ENCODE measurements at regions of chr2 and their contacts with region 1.

Region 1: GRCh38 chr2:101419096-101419663 is 31.9 kb upstream of the CREG2 start:
- DNase-seq: peak; percentile 89
- ATAC-seq: peak; percentile 86
- H3K4me3 ChIP-seq: peak overlapping the region; percentile 48
- H3K27ac ChIP-seq: peak overlapping the region; percentile 85
- H3K4me1 ChIP-seq: peaks cover 14% of the 10 kb centered on the region
- H3K27me3 ChIP-seq: no peaks in the 10 kb centered on the region
- CTCF ChIP-seq: peak; percentile 87

Region 2: GRCh38 chr2:101341901-101342624 is 77.1 kb before region 1 on chr2:
- CTCF ChIA-PET with region 1: interaction called, 14 read pairs
- POLR2A ChIA-PET with region 1: no interaction called
- intact Hi-C with region 1: loop called (anchors 1 kb)
- DNase-seq: peak; percentile 90
- ATAC-seq: peak; percentile 87
- H3K4me3 ChIP-seq: no peak overlapping the region; the same call in 1 of the 2 replicates
- H3K27ac ChIP-seq: peak overlapping the region; percentile 35
- H3K4me1 ChIP-seq: peaks cover 42% of the 10 kb centered on the region
- H3K27me3 ChIP-seq: no peaks in the 10 kb centered on the region
- CTCF ChIP-seq: peak; percentile 92

Region 3: DNA sequence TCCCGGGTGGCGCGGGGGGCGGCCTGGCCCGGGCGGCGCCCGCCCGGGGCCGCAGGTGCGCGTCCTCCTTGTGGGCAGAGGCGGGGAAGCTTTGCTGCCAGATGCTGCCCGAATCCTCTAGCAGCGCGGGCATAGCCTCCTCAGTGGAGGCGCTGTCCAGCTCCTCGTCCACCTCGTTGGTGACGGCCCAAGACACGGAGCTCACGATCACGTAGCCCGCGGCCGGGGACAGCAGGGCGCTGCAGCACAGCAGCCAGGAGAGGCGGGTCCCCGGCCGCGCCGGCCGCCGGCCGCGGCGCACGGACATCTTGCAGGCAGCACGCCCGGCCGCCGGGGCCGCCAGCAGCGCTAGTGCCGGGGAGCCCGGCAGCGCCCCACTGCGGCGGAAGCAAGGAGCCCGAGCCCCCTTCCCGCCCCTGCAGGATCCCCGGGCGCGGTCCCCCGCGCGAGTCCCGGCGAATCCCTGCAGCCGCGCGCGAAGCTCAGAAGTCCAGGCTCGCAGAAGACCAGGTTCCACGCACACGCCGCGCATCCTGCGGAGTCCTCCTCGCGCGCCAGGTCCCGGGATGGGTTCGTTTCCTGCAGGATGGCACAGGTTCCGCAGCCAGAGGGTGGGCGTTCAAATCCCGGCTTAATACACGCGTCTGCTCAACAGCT is 31.9 kb before region 1 on chr2 and contains the start of gene CREG2:
- CTCF ChIA-PET with region 1: interaction called, 21 read pairs
- POLR2A ChIA-PET with region 1: interaction called, 3 read pairs
- intact Hi-C with region 1: loop called (anchors 2 kb)
- DNase-seq: peak; percentile 78
- ATAC-seq: peak; percentile 64
- H3K4me3 ChIP-seq: peak within 1 kb of the TSS; percentile 90
- H3K27ac ChIP-seq: peak within 1 kb of the TSS; percentile 98
- H3K4me1 ChIP-seq: peaks cover 40% of the 10 kb centered on the region
- H3K27me3 ChIP-seq: no peaks in the 10 kb centered on the region
- CTCF ChIP-seq: peak; percentile 62
- total RNA-seq, gene CREG2: 40.0 and 67.9 TPM in 2 replicates

Region 4: GRCh38 chr2:101396316-101396717 is 22.9 kb before region 1 on chr2:
- CTCF ChIA-PET with region 1: no interaction called
- POLR2A ChIA-PET with region 1: interaction called, 21 read pairs
- intact Hi-C with region 1: no loop called
- DNase-seq: peak; percentile 96
- ATAC-seq: peak; percentile 87
- H3K4me3 ChIP-seq: peak overlapping the region; percentile 44
- H3K27ac ChIP-seq: peak overlapping the region; percentile 96
- H3K4me1 ChIP-seq: peaks cover 54% of the 10 kb centered on the region
- H3K27me3 ChIP-seq: no peaks in the 10 kb centered on the region
- CTCF ChIP-seq: no peak

Region 5: DNA sequence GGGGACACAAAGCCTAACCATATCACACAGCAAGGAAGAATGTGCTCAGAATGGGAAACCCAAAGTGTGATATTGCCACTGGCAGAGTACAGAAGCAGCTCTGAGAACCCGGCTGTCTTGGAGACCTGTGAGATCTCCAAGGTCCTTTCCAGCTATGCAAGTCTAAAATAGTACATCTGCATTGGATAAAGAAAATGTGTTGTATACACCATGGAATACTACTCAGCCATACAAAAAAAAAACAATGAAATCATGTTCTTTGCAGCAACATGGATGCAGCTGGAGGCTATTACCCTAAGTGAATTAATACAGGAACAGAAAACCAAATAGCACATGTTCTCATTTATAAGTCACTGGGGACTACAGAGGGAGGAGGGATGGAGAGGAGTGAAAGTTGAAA is 92.2 kb after region 1 on chr2:
- CTCF ChIA-PET with region 1: no interaction called
- POLR2A ChIA-PET with region 1: no interaction called
- intact Hi-C with region 1: no loop called
- DNase-seq: no peak
- ATAC-seq: no peak
- H3K4me3 ChIP-seq: no peak overlapping the region
- H3K27ac ChIP-seq: no peak overlapping the region
- H3K4me1 ChIP-seq: peaks cover 11% of the 10 kb centered on the region
- H3K27me3 ChIP-seq: no peaks in the 10 kb centered on the region
- CTCF ChIP-seq: no peak

Region 6: GRCh38 chr2:101831351-101831865 is 412.2 kb after region 1 on chr2:
- CTCF ChIA-PET with region 1: interaction called, 10 read pairs
- POLR2A ChIA-PET with region 1: no interaction called
- intact Hi-C with region 1: loop called (anchors 1 kb)
- DNase-seq: peak; percentile 79
- ATAC-seq: peak; percentile 77
- H3K4me3 ChIP-seq: no peak overlapping the region
- H3K27ac ChIP-seq: peak overlapping the region; percentile 33
- H3K4me1 ChIP-seq: peaks cover 38% of the 10 kb centered on the region
- H3K27me3 ChIP-seq: no peaks in the 10 kb centered on the region
- CTCF ChIP-seq: peak; percentile 84

Region 7: DNA sequence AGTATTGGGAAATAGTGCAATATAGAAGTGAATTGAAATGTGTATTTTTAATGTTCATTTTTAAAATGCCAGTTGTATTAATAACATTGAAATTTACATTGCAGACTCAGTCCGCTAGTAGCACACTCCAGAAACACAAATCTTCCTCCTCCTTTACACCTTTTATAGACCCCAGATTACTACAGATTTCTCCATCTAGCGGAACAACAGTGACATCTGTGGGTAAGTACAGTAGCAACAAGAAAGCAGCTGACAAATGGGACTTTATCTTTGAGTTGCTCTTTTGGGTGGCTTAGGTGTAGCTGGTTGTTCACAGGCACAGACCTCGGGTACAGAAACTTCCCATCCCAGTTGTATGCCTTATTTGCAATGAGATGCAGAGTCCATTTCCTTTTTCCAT is 454.4 kb after region 1 on chr2:
- CTCF ChIA-PET with region 1: no interaction called
- POLR2A ChIA-PET with region 1: no interaction called
- intact Hi-C with region 1: loop called (anchors 1 kb)
- DNase-seq: peak; percentile 42
- ATAC-seq: peak; percentile 35; the same call in 1 of the 2 replicates
- H3K4me3 ChIP-seq: no peak overlapping the region
- H3K27ac ChIP-seq: no peak overlapping the region
- H3K4me1 ChIP-seq: no peaks in the 10 kb centered on the region
- H3K27me3 ChIP-seq: no peaks in the 10 kb centered on the region
- CTCF ChIP-seq: peak; percentile 50

Measured in PC-3 (cell line).